ENCODE measurements at regions of chr5 and their contacts with region 1.

Region 1: GRCh38 chr5:73448463-73449136 is at the start of gene FOXD1:
- DNase-seq: peak; percentile 58
- H3K4me3 ChIP-seq: peak within 1 kb of the TSS in 3 of 4 donors; percentile 23 to 56 (median 39)
- H3K27ac ChIP-seq: no peak within 1 kb of the TSS
- H3K4me1 ChIP-seq: peaks cover 0 to 24% (median 22%) of the 10 kb centered on the region in 4 donors
- H3K27me3 ChIP-seq: peaks cover 92% of the 10 kb centered on the region
- CTCF ChIP-seq: no peak
- EP300 ChIP-seq: no peak
- POLR2A ChIP-seq: no peak
- total RNA-seq, gene FOXD1: not detected

Region 2: GRCh38 chr5:73215891-73216610 is 232.5 kb before region 1 on chr5:
- in situ Hi-C with region 1: loop called in 3 of 4 experiments (anchors 10 to 25 kb)
- intact Hi-C with region 1: loop called (anchors 5 kb)
- DNase-seq: peak; percentile 83
- H3K4me3 ChIP-seq: peak overlapping the region in 3 of 4 donors; percentile 16 to 54 (median 31)
- H3K27ac ChIP-seq: peak overlapping the region in 1 of 4 donors; percentile 27
- H3K4me1 ChIP-seq: peaks cover 0 to 14% (median 10%) of the 10 kb centered on the region in 4 donors
- H3K27me3 ChIP-seq: peaks cover 85% of the 10 kb centered on the region
- CTCF ChIP-seq: peak; percentile 76 to 94 (median 89)
- EP300 ChIP-seq: no peak
- POLR2A ChIP-seq: no peak

Region 3: GRCh38 chr5:73233347-73234200 is 215.0 kb before region 1 on chr5:
- in situ Hi-C with region 1: loop called in 1 of 4 experiments (anchors 25 kb)
- intact Hi-C with region 1: no loop called
- DNase-seq: no peak
- H3K4me3 ChIP-seq: peak overlapping the region; percentile 16 to 49 (median 30)
- H3K27ac ChIP-seq: no peak overlapping the region
- H3K4me1 ChIP-seq: peaks cover 9 to 26% (median 23%) of the 10 kb centered on the region in 4 donors
- H3K27me3 ChIP-seq: peaks cover 100% of the 10 kb centered on the region
- CTCF ChIP-seq: no peak
- EP300 ChIP-seq: no peak
- POLR2A ChIP-seq: no peak

Region 4: DNA sequence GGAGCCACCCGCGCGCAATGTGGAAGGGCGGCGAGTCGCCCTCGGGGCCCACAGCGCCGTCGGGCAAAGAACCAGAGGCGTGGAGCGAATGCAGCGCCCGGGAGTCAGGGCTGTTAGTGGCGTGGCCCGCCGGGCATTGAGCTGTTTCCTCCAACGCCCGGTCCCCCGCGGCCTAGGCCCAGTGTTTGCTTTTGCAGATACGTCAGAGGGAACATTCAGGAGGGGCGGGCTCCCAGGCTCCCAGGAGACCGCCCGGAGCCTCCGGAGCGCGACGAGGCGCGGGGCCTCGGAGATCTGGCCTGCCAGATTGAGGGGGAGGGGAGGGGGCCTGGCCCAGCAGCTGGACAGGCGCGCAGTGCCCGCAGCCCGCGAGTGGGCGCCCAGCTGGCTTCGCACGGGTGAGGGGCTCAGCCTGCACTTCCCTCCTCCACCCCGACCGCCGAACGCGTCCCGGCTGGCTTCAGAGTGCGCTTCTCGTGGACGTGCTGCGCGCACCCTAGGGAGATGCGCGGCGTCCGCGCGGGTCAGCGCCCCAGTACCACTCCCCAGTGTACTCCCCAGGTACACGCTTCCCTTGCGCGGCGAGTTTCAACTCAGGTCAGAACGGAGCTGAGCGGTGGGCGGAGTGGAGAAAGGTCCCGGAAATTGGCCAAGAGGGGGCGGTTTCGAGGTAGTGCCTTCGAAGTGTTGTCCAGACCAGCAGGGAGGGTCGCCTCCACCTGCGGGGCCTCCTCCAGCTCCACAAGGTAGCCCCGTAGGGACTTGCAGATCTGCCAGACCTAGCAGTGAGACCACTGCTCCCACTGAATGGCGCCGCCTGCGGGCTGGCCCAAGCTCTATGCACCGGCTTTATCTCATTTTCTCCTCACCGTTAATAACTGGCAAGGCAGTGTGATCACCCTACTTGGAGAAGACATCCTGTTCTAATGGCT is 145.2 kb before region 1 on chr5:
- in situ Hi-C with region 1: loop called in 1 of 4 experiments (anchors 25 kb)
- intact Hi-C with region 1: loop called (anchors 10 kb)
- DNase-seq: no peak
- H3K4me3 ChIP-seq: peak overlapping the region in 2 of 4 donors; percentile 22 to 36
- H3K27ac ChIP-seq: no peak overlapping the region
- H3K4me1 ChIP-seq: peaks cover 15 to 28% (median 16%) of the 10 kb centered on the region in 4 donors
- H3K27me3 ChIP-seq: peaks cover 100% of the 10 kb centered on the region
- CTCF ChIP-seq: peak in 1 of 5 experiments; percentile 15
- EP300 ChIP-seq: no peak
- POLR2A ChIP-seq: no peak

Region 5: DNA sequence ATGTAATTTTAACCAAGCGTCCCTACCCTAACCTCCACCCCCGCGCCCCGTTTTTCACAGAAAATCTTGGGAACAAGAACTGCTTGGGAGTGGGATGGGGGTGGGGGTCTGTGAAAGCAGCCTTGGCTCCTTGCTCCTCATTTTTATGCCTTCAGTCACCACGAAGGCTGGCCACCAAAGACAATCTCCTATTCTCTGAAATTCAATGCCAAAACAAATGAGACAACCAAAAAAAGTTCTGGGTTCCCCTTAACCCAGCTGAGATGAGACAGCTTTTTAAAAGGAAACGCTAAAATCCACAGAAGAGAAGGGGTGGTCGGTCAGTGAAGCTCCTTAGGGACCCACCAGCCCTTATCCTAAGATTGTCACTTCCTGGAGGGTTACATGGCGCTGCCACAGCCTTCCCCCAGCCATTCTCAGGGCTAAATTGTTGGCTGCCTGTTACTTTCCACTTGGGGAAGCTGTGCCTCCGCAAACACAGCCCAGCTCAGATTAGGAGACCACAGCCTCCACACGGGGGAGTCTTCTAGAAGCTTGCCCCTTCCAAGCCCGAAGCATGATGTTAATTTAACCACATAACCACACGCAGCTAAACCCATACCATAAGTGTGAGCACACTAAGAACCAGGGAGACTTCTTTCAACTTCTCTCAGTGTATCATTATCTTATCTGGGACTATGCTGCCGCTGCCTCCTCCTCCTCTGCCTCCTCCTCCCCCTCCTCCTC is 136.3 kb before region 1 on chr5:
- in situ Hi-C with region 1: loop called in 1 of 4 experiments (anchors 25 kb)
- intact Hi-C with region 1: loop called (anchors 10 kb)
- DNase-seq: peak; percentile 22
- H3K4me3 ChIP-seq: no peak overlapping the region
- H3K27ac ChIP-seq: no peak overlapping the region
- H3K4me1 ChIP-seq: peaks cover 0 to 5% (median 2%) of the 10 kb centered on the region in 4 donors
- H3K27me3 ChIP-seq: peaks cover 97% of the 10 kb centered on the region
- CTCF ChIP-seq: peak in 1 of 5 experiments; percentile 6
- EP300 ChIP-seq: no peak
- POLR2A ChIP-seq: no peak

Measured in transverse colon (tissue), 4 donors.